SK-N-SH (cell line): ENCODE measurements at regions of chr11 and their contacts with region 1.

Region 1: DNA sequence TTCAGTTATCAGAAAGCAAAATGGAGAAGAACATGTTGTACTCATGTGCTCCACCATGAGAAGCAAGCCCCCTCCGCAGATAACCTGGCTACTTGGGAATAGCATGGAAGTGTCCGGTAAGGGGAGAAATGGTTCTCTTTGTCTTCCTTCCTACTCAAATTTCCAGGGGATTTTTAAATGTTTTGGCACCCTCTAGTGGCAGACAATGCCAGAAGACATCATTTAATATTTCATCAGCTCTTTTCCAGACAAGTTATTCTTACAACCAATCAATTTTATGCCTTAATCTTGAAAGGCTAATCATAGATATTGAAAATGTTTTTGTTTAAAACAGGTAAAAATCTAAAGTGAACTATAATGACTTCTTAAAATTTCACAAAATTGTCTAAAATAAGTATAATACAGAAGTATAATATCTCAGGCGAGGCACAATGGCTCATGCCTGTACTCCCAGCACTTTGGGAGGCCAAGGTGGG is 15.7 kb downstream of the CRTAM start:
- DNase-seq: peak; percentile 76
- H3K4me3 ChIP-seq: no peak overlapping the region; a peak in 1 of 4 replicates
- H3K27ac ChIP-seq: peak overlapping the region in 1 of 2 experiments; percentile 21; a peak in 1 of 4 replicates
- H3K4me1 ChIP-seq: peaks cover 0 to 26% of the 10 kb centered on the region in 2 experiments; a peak in 2 of 4 replicates
- H3K27me3 ChIP-seq: no peaks in the 10 kb centered on the region
- CTCF ChIP-seq: peak; percentile 85
- EP300 ChIP-seq: no peak
- RAD21 ChIP-seq: peak; percentile 90

Region 2: GRCh38 chr11:122628810-122629555 is 225.0 kb before region 1 on chr11:
- CTCF ChIA-PET with region 1: interaction called, 94 read pairs
- POLR2A ChIA-PET with region 1: no interaction called
- DNase-seq: peak; percentile 82
- H3K4me3 ChIP-seq: no peak overlapping the region
- H3K27ac ChIP-seq: peak overlapping the region in 1 of 2 experiments; percentile 34; a peak in 2 of 4 replicates
- H3K4me1 ChIP-seq: no peaks in the 10 kb centered on the region; a peak in 2 of 4 replicates
- H3K27me3 ChIP-seq: no peaks in the 10 kb centered on the region
- CTCF ChIP-seq: peak; percentile 86
- EP300 ChIP-seq: no peak
- RAD21 ChIP-seq: peak; percentile 84

Region 3: GRCh38 chr11:122788781-122789535 is 65.1 kb before region 1 on chr11:
- CTCF ChIA-PET with region 1: interaction called, 56 read pairs
- POLR2A ChIA-PET with region 1: no interaction called
- DNase-seq: no peak
- H3K4me3 ChIP-seq: no peak overlapping the region
- H3K27ac ChIP-seq: no peak overlapping the region
- H3K4me1 ChIP-seq: peaks cover 0 to 24% of the 10 kb centered on the region in 2 experiments; a peak in 3 of 4 replicates
- H3K27me3 ChIP-seq: no peaks in the 10 kb centered on the region
- CTCF ChIP-seq: peak; percentile 48
- EP300 ChIP-seq: no peak
- RAD21 ChIP-seq: no peak

Region 4: GRCh38 chr11:122814401-122814800 is 39.6 kb before region 1 on chr11:
- CTCF ChIA-PET with region 1: interaction called, 68 read pairs
- POLR2A ChIA-PET with region 1: no interaction called
- DNase-seq: peak; percentile 30
- H3K4me3 ChIP-seq: no peak overlapping the region
- H3K27ac ChIP-seq: no peak overlapping the region
- H3K4me1 ChIP-seq: no peaks in the 10 kb centered on the region; a peak in 2 of 4 replicates
- H3K27me3 ChIP-seq: no peaks in the 10 kb centered on the region
- CTCF ChIP-seq: peak; percentile 31; the same call in 1 of the 2 replicates
- EP300 ChIP-seq: no peak
- RAD21 ChIP-seq: peak; percentile 52

Region 5: DNA sequence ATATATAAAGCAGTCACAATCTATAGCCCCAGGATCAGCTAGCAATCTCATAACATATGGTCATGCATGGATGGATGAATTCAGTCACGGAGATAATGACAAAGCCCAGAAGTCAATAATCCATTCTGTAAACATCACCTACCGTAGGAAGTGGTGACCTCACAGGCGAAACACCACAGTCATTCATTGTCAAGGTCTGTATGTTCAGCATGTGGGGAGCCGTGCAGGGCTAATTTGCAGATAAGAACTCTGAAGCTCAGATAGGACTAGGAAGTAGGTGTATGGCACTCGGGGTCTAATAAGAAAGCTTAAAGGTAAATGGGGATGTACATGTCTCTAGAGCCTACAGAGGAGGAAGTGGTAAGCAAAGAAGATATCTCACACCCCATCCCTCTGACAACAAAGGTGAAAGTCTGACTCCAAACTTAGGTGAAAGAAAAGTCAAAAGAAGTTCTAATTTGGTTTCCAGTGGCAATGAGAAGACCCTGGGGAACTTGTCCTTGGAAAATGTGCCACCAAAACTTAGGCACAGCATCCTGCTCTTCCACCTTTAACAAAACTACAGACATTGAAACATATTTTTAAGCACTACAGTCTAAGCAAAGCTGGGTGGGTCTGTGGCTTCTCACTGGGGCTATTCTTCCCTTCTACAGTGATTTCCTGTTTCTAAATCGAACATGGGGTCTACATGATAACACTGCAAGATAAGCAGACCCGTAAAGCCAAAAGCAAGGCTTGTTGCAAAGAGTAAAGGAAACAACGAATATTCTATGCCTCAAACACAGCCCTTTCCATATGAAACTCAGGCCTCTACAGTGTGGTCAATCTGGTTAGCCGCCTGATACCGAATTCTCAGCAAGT is 10.5 kb before region 1 on chr11:
- CTCF ChIA-PET with region 1: interaction called, 18 read pairs
- POLR2A ChIA-PET with region 1: no interaction called
- DNase-seq: no peak
- H3K4me3 ChIP-seq: no peak overlapping the region
- H3K27ac ChIP-seq: no peak overlapping the region
- H3K4me1 ChIP-seq: no peaks in the 10 kb centered on the region; a peak in 1 of 4 replicates
- H3K27me3 ChIP-seq: no peaks in the 10 kb centered on the region; the same call in 1 of the 2 replicates
- CTCF ChIP-seq: no peak
- EP300 ChIP-seq: no peak
- RAD21 ChIP-seq: no peak

Region 6: GRCh38 chr11:123020968-123021367 is 167.0 kb after region 1 on chr11:
- CTCF ChIA-PET with region 1: interaction called, 409 read pairs
- POLR2A ChIA-PET with region 1: no interaction called
- DNase-seq: peak; percentile 76
- H3K4me3 ChIP-seq: no peak overlapping the region
- H3K27ac ChIP-seq: no peak overlapping the region
- H3K4me1 ChIP-seq: no peaks in the 10 kb centered on the region
- H3K27me3 ChIP-seq: 0 out of 2 replicates have a peak, but pooled peaks cover 4% of the 10 kb centered on the region
- CTCF ChIP-seq: peak; percentile 63
- EP300 ChIP-seq: no peak
- RAD21 ChIP-seq: peak; percentile 78

Region 7: GRCh38 chr11:123054301-123055065 is 200.5 kb after region 1 on chr11:
- CTCF ChIA-PET with region 1: interaction called, 13 read pairs
- POLR2A ChIA-PET with region 1: no interaction called
- DNase-seq: peak; percentile 75
- H3K4me3 ChIP-seq: no peak overlapping the region; a peak in 1 of 4 replicates
- H3K27ac ChIP-seq: peak overlapping the region in 1 of 2 experiments; percentile 99; a peak in 2 of 4 replicates
- H3K4me1 ChIP-seq: peaks cover 9 to 24% of the 10 kb centered on the region in 2 experiments; a peak in 3 of 4 replicates
- H3K27me3 ChIP-seq: no peaks in the 10 kb centered on the region
- CTCF ChIP-seq: peak; percentile 80
- EP300 ChIP-seq: no peak
- RAD21 ChIP-seq: peak; percentile 82

Region 8: DNA sequence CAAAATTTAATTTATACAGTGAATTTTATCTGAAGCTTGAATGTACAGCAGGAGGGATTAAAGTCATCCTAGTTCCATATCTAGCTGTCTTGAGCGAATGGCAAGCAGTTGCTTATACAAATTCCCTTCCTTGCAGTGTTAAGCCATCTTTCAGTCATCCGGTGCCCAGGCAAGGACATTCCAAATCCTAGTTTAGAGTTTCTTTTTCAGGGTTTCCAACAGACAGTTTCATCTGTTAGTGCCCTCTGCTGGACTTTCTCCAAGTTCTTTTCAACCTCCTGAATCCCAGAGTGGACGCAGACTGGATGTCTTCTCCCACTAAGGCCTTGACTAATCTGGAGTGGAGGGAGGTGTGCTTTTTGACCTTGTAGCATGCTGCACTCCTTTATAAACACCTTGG is 621.5 kb after region 1 on chr11:
- CTCF ChIA-PET with region 1: no interaction called
- POLR2A ChIA-PET with region 1: no interaction called
- DNase-seq: peak; percentile 26
- H3K4me3 ChIP-seq: no peak overlapping the region
- H3K27ac ChIP-seq: peak overlapping the region; percentile 11 to 96; a peak in 3 of 4 replicates
- H3K4me1 ChIP-seq: peaks cover 10 to 37% of the 10 kb centered on the region in 2 experiments; a peak in 3 of 4 replicates
- H3K27me3 ChIP-seq: no peaks in the 10 kb centered on the region
- CTCF ChIP-seq: peak; percentile 63
- EP300 ChIP-seq: no peak
- RAD21 ChIP-seq: peak; percentile 66